Activated CD8-positive, alpha-beta T cell treated with anti-CD3 and anti-CD28 coated beads for 36 hours (primary cell): ENCODE measurements at regions of chr6 and their contacts with region 1.

Region 1: GRCh38 chr6:30730601-30731435 is 10.7 kb downstream of the TUBB start:
- DNase-seq: peak; percentile 93
- ATAC-seq: peak; percentile 88
- H3K4me3 Mint-ChIP-seq: peak overlapping the region; percentile 54
- H3K27ac Mint-ChIP-seq: peak overlapping the region; percentile 44
- H3K4me1 Mint-ChIP-seq: peaks cover 46% of the 10 kb centered on the region
- H3K27me3 Mint-ChIP-seq: no peaks in the 10 kb centered on the region
- CTCF ChIP-seq: peak; percentile 75

Region 2: GRCh38 chr6:30616811-30617564 is 113.8 kb before region 1 on chr6 and contains the start of gene PPP1R10:
- CTCF ChIA-PET with region 1: interaction called, 25 read pairs
- POLR2A ChIA-PET with region 1: interaction called, 11 read pairs
- intact Hi-C with region 1: no loop called
- DNase-seq: peak; percentile 99
- ATAC-seq: peak; percentile 82
- H3K4me3 Mint-ChIP-seq: peak within 1 kb of the TSS; percentile 95
- H3K27ac Mint-ChIP-seq: peak within 1 kb of the TSS; percentile 98
- H3K4me1 Mint-ChIP-seq: peaks cover 39% of the 10 kb centered on the region
- H3K27me3 Mint-ChIP-seq: no peaks in the 10 kb centered on the region
- CTCF ChIP-seq: no peak
- total RNA-seq, gene PPP1R10: 59.0 to 59.8 TPM

Region 3: GRCh38 chr6:30678964-30679726 is 51.7 kb before region 1 on chr6:
- CTCF ChIA-PET with region 1: interaction called, 704 read pairs
- POLR2A ChIA-PET with region 1: interaction called, 500 read pairs
- intact Hi-C with region 1: loop called (anchors 2 kb)
- DNase-seq: peak; percentile 92
- ATAC-seq: peak; percentile 27
- H3K4me3 Mint-ChIP-seq: peak overlapping the region; percentile 88
- H3K27ac Mint-ChIP-seq: peak overlapping the region; percentile 95
- H3K4me1 Mint-ChIP-seq: peaks cover 11% of the 10 kb centered on the region
- H3K27me3 Mint-ChIP-seq: no peaks in the 10 kb centered on the region
- CTCF ChIP-seq: peak; percentile 97

Region 4: DNA sequence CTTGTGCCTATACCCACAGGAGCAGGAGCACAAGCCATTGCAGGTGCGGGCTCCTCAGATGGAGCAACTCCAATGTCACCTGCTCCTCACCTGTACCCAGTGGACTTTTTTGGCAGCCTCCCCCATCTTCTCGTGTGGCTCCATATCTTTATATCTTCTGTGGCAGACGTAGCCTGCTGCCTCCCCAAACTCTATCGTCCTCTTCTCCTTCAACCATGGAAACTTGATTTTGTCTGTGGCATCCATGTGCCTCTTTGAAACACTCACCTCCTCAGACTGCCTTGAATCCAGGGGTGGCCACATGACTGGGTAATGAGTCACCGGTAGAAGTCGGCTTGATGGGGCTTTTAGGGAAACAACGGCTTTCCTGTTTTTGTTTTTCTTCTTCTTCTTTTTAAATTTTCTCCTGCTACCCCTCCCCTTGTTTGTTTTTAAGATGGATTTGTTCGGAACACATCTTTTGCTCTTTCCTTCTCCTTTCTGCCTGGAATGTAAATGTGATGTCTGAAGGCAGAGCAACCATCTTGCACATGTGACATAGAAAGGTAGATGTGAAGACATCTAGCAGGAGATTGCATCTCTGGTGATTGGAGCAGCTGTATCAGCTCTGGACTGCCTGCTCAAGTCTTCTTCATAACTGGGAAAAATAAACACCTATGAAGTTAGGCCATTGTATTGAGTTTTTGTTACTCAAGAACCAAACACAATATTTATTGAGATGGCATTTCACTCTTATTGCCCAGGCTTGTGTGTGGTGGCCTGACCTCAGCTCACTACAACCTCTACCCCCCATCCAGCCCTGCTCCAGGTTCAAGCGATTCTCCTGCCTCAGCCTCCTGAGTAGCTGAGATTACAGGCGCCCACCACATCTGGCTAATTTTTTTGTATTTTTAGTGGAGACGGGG is 83.6 kb after region 1 on chr6:
- CTCF ChIA-PET with region 1: interaction called, 30 read pairs
- POLR2A ChIA-PET with region 1: interaction called, 212 read pairs
- intact Hi-C with region 1: loop called (anchors 5 kb)
- DNase-seq: peak; percentile 82
- ATAC-seq: peak; percentile 29
- H3K4me3 Mint-ChIP-seq: peak overlapping the region; percentile 41
- H3K27ac Mint-ChIP-seq: peak overlapping the region; percentile 98
- H3K4me1 Mint-ChIP-seq: peaks cover 83% of the 10 kb centered on the region
- H3K27me3 Mint-ChIP-seq: no peaks in the 10 kb centered on the region
- CTCF ChIP-seq: no peak

Region 5: DNA sequence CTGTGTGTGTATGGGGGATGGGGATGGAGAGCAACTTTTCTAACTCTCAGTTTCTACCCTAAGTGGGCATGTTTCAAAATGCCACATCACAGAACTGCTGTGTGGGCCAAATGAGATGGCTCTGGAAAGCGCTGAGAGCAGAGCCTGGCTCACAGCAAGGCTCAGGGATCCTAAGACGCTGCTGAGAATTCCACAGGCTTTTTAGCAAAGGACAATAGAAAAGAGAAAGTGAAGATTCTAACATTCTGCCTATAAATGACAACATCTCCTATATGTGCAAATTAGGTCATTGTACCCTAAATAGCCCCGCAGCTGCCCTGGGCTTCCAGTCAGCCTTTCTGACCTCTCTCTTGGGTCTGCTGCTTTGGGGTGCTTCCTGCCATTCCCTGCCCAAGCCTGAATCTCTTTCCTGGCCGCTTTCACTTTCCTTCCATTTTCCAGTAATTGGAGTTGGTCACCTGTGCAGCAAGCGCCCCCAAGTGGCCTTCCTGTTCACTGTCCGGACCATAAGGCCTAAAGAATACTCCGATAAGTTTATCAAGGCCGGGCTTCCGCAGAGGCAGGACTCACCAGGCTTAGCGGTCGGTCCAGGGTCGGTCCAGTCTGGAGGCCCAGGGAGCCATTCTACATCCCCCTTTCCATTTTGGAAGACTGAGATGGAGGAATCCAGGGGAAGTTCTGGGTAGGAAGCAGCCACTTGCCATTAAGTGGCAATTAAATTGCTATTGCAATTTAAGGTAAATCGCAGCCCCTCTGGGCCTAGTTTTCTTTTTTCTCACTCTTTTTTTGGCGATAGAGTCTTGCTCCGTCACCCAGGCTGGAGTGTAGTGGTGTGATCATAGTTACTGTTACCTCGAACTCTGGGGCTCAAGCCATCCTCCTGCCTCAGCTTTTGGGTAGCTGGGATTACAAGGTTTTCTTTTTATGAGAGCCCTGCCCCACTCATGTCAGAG is 146.9 kb after region 1 on chr6:
- CTCF ChIA-PET with region 1: interaction called, 8 read pairs
- POLR2A ChIA-PET with region 1: interaction called, 7 read pairs
- intact Hi-C with region 1: loop called (anchors 5 kb)
- DNase-seq: peak; percentile 87
- ATAC-seq: peak; percentile 82
- H3K4me3 Mint-ChIP-seq: peak overlapping the region; percentile 73
- H3K27ac Mint-ChIP-seq: peak overlapping the region; percentile 92
- H3K4me1 Mint-ChIP-seq: peaks cover 41% of the 10 kb centered on the region
- H3K27me3 Mint-ChIP-seq: no peaks in the 10 kb centered on the region
- CTCF ChIP-seq: peak; percentile 93

Region 6: DNA sequence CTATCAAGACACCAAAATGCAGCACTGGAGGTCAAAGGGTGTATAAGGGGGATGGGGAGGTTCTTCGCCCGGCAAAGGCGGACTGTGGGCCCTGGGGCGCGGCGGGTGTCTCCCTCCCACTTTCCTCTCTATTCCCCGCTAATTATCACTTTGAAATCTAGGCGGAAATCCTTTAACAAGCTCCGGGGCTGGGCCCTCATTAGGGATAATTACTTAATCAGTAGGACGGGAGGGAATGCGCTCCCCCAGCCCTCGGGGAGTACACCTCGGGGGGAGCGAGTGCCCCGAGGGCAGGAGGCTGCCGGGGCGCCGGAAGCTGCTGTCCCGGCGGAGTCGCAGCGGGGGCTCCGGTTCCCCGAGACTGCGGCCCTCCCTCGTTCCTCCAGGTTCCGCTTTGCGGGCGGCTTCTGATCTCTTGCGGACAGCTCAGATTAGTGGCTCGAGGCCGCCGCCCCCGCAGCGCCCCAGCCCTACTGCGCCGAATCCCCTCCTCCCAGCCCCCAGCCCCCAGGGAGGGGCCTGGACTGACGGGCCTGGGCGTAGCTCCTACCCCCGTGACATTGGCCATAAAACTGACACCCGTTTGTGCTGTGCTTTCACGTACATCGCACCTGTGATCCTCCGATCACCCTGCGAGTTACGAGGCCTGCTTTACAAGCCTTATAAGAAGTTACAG is 224.7 kb after region 1 on chr6:
- CTCF ChIA-PET with region 1: no interaction called
- POLR2A ChIA-PET with region 1: no interaction called
- intact Hi-C with region 1: no loop called
- DNase-seq: peak; percentile 88
- ATAC-seq: peak; percentile 90
- H3K4me3 Mint-ChIP-seq: peak overlapping the region; percentile 76
- H3K27ac Mint-ChIP-seq: peak overlapping the region; percentile 58
- H3K4me1 Mint-ChIP-seq: peaks cover 22% of the 10 kb centered on the region
- H3K27me3 Mint-ChIP-seq: peaks cover 33% of the 10 kb centered on the region
- CTCF ChIP-seq: no peak